ENCODE measurements at regions of chr19 and their contacts with region 1.

Region 1: GRCh38 chr19:10194500-10195289 is at the start of gene DNMT1:
- DNase-seq: peak; percentile 99
- H3K4me3 Mint-ChIP-seq: peak within 1 kb of the TSS; percentile 100
- H3K27ac Mint-ChIP-seq: peak within 1 kb of the TSS; percentile 97
- H3K4me1 Mint-ChIP-seq: peaks cover 60% of the 10 kb centered on the region
- H3K27me3 Mint-ChIP-seq: no peaks in the 10 kb centered on the region
- total RNA-seq, gene DNMT1: 314 to 331 TPM

Region 2: GRCh38 chr19:10106100-10106936 is 88.4 kb before region 1 on chr19 and contains the start of gene PPAN:
- CTCF ChIA-PET with region 1: no interaction called
- POLR2A ChIA-PET with region 1: interaction called, 10 read pairs
- DNase-seq: peak; percentile 98
- H3K4me3 Mint-ChIP-seq: peak within 1 kb of the TSS; percentile 88
- H3K27ac Mint-ChIP-seq: peak within 1 kb of the TSS; percentile 97
- H3K4me1 Mint-ChIP-seq: peaks cover 79% of the 10 kb centered on the region
- H3K27me3 Mint-ChIP-seq: no peaks in the 10 kb centered on the region
- total RNA-seq, gene PPAN: 74.3 to 75.6 TPM

Region 3: DNA sequence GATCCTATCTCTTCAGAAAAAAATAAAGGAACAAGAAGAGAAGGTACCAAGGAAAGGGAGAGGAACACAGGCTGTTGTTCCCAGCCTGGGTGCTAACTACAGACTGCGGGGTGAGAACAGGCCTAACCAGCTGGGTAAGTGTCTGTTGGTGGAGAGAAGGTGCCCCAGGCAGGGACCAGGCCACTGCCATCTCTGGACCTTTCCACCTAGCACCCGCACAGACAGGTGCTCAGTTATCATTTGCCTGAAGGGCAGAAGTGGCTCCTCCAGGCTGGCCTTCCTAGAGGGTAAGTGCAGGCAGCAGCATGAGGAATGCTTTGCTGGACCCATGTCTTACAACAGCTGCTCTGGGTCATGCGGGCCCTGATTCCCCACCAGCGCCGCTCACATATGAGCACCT is 10.1 kb before region 1 on chr19:
- CTCF ChIA-PET with region 1: interaction called, 3 read pairs
- POLR2A ChIA-PET with region 1: interaction called, 15 read pairs
- DNase-seq: no peak
- H3K4me3 Mint-ChIP-seq: no peak overlapping the region
- H3K27ac Mint-ChIP-seq: no peak overlapping the region
- H3K4me1 Mint-ChIP-seq: peaks cover 27% of the 10 kb centered on the region
- H3K27me3 Mint-ChIP-seq: no peaks in the 10 kb centered on the region

Region 4: DNA sequence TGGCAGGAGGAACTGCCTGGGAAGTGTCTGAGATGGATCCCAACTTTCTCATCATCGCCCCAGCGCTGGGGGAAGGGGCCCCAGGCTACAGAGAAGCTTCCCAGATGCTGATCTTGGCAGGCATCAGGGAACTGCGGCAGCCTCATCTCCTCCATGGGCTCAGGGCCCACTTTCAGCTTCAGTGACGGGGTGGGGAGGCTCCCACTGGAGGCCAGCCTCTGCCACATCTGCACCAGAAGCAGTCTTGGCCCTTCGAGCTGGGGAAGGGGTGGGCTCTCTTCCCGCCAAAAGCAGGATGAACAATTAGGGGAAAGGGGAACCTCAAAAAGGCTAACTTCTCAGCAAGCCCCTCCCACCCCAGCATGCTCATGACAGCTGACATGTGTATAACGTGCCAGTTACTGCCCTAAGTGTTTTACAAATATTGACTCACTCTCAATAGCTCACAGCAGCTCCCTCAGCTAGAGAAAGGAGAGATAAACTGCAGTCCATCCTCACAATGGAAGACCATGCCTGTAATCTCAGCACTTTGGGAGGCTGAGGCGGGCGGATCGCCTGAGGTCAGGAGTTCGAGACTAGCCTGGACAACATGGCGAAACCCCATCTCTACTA is 43.6 kb after region 1 on chr19:
- CTCF ChIA-PET with region 1: interaction called, 9 read pairs
- POLR2A ChIA-PET with region 1: interaction called, 21 read pairs
- DNase-seq: no peak
- H3K4me3 Mint-ChIP-seq: no peak overlapping the region
- H3K27ac Mint-ChIP-seq: peak overlapping the region; percentile 26
- H3K4me1 Mint-ChIP-seq: peaks cover 29% of the 10 kb centered on the region
- H3K27me3 Mint-ChIP-seq: no peaks in the 10 kb centered on the region